ENCODE measurements at regions of chr1 and their contacts with region 1.

Region 1: DNA sequence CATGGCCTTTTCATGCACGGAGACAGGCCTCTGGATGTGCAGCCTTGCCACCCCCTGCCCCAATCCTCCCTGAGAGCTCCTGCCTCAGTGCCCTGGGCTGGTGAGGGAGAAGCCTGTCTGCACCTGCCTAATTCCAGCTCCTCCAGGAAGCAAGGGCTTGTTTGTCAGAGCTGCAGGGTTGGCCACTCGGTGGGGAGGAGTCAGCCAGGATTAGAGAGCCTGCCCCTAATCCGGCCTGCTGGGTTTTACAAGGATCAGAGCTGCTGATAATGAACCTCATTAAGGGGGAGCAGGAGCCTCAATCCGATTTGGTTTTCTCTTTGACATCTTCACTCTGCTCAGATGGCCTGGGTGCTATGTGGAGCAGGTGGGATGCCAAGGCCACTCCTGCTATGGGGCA is 31.9 kb upstream of the LHX4 start:
- DNase-seq: no peak
- ATAC-seq: no peak
- H3K4me3 ChIP-seq: no peak overlapping the region
- H3K27ac ChIP-seq: no peak overlapping the region
- H3K4me1 ChIP-seq: no peaks in the 10 kb centered on the region
- CTCF ChIP-seq: no peak
- EP300 ChIP-seq: no peak
- POLR2A ChIP-seq: no peak
- RAD21 ChIP-seq: no peak

Region 2: DNA sequence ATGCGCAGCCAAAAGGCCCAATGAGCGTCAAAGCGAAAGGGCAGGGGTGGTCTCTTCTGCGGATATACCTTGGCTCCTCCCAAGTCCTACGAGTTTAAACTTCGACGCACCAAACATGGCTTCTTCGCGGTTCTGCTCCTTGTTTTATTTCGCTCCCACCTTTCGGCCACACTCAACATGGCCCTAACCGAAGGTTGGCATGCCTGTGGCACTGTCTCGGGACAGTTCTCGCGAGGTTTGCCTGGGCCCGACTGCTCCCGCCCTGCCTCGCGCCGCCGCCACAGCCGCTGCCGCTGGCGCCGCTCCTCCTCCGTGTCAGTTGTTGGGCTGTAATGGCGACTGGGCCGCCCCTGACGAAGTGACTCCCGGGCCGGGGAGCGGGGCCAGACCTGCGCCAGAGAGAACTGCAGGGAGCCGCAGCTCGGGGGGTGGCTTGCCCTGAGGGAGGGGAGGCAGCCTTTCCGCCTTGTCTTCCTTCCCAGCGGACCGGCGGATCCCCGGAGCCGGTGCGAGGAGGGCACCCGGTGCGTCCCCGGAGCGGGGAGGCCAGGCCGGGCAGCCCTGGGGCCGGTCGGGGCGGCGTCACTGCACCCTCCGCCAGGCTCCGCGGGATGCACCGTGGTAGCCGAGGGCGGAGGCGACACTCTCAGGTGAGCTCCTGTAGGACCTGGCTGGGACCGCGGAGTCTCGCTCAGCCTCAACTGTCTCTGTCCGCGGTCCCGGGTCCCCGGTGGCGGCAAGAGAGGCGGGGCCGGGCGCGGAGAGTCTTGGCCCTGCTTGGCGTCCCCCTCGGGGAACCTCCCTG is 243.5 kb before region 1 on chr1 and contains the start of gene CEP350:
- CTCF ChIA-PET with region 1: no interaction called
- POLR2A ChIA-PET with region 1: no interaction called
- DNase-seq: peak; percentile 77 to 99
- ATAC-seq: peak; percentile 89 to 97
- H3K4me3 ChIP-seq: peak within 1 kb of the TSS; percentile 68
- H3K27ac ChIP-seq: peak within 1 kb of the TSS; percentile 79 to 97
- H3K4me1 ChIP-seq: peaks cover 17% of the 10 kb centered on the region
- CTCF ChIP-seq: no peak
- EP300 ChIP-seq: no peak
- POLR2A ChIP-seq: peak; percentile 86
- RAD21 ChIP-seq: no peak; a peak in 1 of 5 replicates
- polyA plus RNA-seq, gene CEP350: 21.4 and 22.6 TPM in 2 replicates

Region 3: DNA sequence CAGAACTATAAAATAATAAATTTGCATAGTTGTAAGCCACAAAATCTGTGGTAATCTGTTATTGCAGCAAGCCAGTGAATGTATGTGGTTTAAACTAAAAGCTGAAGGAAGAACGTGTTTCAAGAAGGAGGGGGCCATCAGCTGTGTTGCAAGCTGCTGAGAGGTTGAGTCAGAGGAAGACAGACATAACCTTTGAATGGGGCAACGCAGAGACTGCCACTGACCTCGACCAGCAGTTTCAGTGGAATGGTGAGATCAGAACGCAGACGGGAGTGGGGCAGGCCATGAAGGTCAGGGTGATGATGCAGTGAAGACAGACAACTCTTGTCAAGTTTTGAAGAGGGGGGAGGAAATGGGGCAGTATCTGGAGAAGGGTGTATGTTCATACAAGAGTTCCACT is 66.7 kb before region 1 on chr1:
- CTCF ChIA-PET with region 1: no interaction called
- POLR2A ChIA-PET with region 1: no interaction called
- DNase-seq: peak in 1 of 2 experiments; percentile 24
- ATAC-seq: no peak; a peak in 1 of 6 replicates
- H3K4me3 ChIP-seq: no peak overlapping the region
- H3K27ac ChIP-seq: no peak overlapping the region
- H3K4me1 ChIP-seq: 0 out of 3 replicates have a peak, but pooled peaks cover 3% of the 10 kb centered on the region
- CTCF ChIP-seq: no peak
- EP300 ChIP-seq: no peak
- POLR2A ChIP-seq: no peak
- RAD21 ChIP-seq: no peak

Region 4: DNA sequence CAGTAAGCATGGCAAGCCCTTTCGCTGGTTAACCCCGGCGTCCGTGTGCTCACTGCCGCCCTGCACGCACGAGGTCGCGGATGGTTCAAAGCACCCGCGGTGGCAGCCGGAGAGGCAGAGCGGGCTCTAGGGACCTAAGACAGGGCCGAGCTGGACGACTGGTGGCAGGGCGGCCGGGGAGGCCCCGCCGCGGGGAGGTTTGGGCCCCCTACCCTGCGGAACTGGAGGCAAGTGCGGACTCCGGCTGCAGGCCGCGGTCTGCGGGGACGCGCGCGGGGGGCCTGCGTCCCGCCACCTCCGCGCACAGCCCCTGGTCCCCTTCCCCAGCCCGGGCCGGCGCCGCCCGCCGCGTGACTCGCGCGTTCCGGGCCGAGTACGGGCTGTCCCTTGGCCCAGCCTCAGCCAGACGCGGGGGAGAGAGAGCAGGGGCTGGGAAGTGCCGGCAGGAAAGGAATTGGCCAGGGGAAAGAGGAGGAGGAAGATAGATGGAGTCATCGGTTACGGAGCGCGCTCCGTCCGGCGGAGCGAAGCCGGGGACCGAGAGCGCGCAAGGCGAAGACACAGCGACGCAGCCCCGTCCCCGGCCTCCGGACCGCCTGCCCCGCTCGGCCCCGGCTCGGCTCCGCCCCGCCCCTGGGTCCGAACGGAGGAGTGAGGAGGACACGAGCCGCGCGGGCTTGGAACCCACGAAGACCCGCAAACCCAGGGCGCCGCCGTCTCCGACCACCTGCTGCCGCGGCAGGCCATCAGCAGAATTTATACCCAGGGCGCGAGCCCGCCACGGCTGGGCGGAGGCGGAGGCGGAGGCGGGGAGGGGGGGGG is 31.2 kb after region 1 on chr1:
- CTCF ChIA-PET with region 1: interaction called, 15 read pairs
- POLR2A ChIA-PET with region 1: no interaction called
- DNase-seq: peak; percentile 65 to 69
- ATAC-seq: peak; percentile 54 to 57
- H3K4me3 ChIP-seq: peak overlapping the region; percentile 70
- H3K27ac ChIP-seq: peak overlapping the region; percentile 69 to 87
- H3K4me1 ChIP-seq: peaks cover 4% of the 10 kb centered on the region; the same call in 2 of the 3 replicates
- CTCF ChIP-seq: no peak
- EP300 ChIP-seq: no peak
- POLR2A ChIP-seq: peak; percentile 39
- RAD21 ChIP-seq: no peak

Measured in A549 (cell line).